GM10248 (cell line): ENCODE measurements at regions of chr6 and their contacts with region 1.

Region 1: DNA sequence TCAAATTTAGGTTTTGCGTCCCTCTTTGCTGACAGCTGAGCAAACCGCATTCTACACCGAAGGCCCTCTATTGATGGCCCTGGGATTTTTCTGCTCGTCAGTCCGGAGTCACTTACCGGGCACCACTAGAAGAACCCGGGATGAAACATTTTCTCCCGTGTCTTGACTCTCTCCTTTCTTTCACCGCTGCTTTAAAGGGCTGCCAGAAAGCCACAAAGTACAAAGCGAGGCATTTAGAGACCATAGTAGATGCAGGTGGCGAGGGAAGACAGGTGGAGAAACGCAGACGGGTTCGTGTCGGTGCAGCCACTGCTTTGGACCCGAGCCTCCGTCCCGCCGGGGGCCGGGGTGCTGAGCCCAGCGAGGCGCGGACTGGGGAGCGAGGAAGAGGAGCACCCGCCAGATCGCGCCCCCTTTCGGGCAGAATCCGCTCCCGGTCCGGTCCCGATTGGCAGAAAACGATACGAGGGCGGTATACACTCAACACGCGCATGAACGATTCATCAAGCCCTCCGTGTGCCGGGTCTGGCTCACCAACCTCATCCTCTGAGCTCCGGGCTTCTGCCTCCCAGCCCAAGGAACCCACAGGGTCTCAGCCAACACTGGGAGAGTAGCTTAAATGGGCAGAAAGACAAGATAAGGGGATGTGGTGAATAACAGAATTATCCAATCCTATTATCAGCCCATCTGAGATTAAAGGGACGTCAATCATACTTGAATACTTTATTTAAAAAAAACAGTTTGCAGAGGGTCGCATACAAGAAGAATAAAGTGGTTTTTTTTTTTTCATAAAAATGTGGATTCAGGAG is 84.9 kb downstream of the TRIM27 start:
- DNase-seq: peak; percentile 73
- CTCF ChIP-seq: peak; percentile 74

Region 2: GRCh38 chr6:28824793-28825731 is 13.8 kb before region 1 on chr6:
- CTCF ChIA-PET with region 1: interaction called, 11 read pairs
- POLR2A ChIA-PET with region 1: no interaction called
- DNase-seq: no peak
- CTCF ChIP-seq: no peak

Region 3: DNA sequence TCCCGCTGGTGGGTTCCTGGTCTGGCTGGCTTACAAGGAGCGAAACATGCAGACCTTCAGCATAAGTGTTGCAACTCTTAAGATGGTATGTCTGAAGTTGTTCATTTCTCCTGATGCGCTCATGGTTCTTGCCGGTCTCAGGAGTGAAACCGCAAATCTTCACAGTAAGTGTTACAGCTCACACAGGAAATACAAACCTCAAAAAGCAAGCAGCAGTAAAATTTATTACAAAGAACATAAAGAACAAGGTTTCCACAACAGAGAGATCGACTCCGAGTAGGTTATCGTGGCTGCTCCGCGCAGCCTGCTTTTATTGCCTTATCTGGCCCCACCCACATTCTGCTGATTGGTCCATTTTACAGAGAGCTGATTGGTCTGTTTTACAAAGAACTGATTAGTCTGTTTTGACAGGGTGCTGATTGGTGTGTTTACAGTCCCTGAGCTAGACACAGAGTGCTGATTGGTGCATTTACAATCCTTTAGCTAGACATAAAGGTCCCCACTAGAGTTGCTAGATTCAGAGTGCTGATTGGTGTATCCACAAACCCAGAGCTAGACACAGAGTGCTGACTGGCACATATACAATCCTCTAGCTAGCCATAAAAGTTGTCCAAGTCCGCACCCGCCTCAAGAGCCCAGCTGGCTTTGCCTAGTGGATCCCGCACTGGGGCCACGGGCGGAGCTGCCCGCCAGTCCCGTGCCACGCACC is 45.7 kb after region 1 on chr6:
- CTCF ChIA-PET with region 1: interaction called, 13 read pairs
- POLR2A ChIA-PET with region 1: no interaction called
- DNase-seq: no peak
- CTCF ChIP-seq: no peak

Region 4: DNA sequence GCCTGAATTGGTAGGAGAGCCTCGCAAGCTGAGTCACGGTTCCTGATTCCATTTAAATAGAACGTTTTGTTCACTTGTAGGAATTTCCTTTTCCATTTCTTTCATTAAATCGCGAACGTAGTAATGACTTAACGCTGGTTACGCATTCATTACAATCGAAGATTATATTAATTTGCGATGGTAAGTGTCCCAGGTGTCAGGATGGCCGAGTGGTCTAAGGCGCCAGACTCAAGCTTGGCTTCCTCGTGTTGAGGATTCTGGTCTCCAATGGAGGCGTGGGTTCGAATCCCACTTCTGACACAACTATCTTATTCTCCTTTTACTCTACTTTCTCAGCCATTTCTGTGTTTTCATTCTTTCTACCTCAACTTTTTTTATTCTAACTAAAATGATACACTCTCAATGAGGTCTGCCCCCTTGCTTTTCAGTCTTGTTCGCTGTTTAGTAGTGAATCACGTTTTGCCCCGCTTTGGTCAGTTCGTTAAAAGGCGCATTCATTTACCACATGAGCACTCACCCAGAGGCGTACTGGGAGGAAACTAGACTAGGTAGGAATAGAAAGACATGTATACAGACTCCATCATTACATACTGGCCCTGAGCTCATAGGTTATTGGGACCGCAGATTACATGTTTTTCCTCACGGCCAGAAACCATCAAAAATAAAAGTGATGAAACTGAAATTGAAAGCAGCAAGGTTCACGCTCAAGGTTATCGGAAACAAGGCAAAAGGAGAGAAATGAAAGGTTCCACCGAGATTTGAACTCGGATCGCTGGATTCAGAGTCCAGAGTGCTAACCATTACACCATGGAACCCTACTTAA is 102.2 kb after region 1 on chr6:
- CTCF ChIA-PET with region 1: interaction called, 20 read pairs
- POLR2A ChIA-PET with region 1: no interaction called
- DNase-seq: peak; percentile 39
- CTCF ChIP-seq: no peak

Region 5: GRCh38 chr6:29011276-29011734 is 172.5 kb after region 1 on chr6:
- CTCF ChIA-PET with region 1: interaction called, 79 read pairs
- POLR2A ChIA-PET with region 1: no interaction called
- DNase-seq: peak; percentile 32
- CTCF ChIP-seq: no peak